Activated CD4-positive, alpha-beta T cell treated with anti-CD3 and anti-CD28 coated beads, Interleukin-2, amount 10 ng/mL, durations not matched to agents 24 days and 14 days (primary cell): ENCODE measurements at regions of chr14 and their contacts with region 1.

Region 1: GRCh38 chr14:51744372-51745130 is 92.8 kb downstream of the FRMD6 start:
- DNase-seq: peak; percentile 79
- H3K4me3 Mint-ChIP-seq: no peak overlapping the region
- H3K27ac Mint-ChIP-seq: peak overlapping the region; percentile 48
- H3K4me1 Mint-ChIP-seq: no peaks in the 10 kb centered on the region
- H3K27me3 Mint-ChIP-seq: no peaks in the 10 kb centered on the region

Region 2: DNA sequence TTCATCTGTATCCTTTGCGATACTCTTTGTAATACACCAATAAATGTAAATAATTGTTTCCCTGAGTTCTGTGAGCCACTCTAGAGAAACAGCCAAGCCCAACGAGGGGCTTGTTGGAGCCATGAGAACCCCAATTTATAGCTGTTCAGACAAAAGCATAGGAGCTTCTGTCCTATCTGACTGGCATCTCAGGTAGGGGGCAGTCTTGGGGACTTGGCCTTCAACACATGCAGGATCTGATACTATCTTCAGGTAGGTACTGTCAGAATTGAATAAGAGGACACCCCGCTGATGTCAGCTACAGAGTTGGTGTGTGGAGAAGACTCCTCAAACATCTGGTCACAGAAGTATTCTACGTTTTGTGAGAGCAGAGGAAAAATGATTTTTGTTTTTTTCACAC is 782.5 kb after region 1 on chr14:
- intact Hi-C with region 1: loop called (anchors 5 kb)
- DNase-seq: peak; percentile 58
- H3K4me3 Mint-ChIP-seq: no peak overlapping the region
- H3K27ac Mint-ChIP-seq: no peak overlapping the region
- H3K4me1 Mint-ChIP-seq: peaks cover 3% of the 10 kb centered on the region
- H3K27me3 Mint-ChIP-seq: no peaks in the 10 kb centered on the region